PC-9 (cell line): ENCODE measurements at regions of chr6 and their contacts with region 1.

Region 1: DNA sequence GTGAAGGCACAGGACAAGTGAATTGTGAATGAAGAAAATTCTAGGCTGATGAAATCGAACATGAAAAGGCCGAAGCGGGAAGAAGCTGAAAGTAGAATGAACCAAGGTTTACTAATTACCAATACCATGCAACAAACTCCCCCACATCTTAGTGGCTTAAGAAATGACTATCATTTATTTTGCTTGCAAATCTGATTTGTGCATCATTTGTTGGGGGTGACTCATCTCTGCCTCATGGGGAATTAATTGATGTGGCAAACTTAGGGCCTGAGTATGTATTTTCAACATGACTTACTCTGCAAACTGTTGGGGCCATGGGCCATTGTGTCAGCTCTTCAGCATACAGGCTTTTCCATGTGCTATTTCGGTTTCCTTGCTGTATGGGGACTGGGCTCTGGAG is 26.8 kb downstream of the PPP1R14C start:
- DNase-seq: peak in 1 of 2 experiments; percentile 57
- H3K4me3 ChIP-seq: no peak overlapping the region
- H3K27ac ChIP-seq: no peak overlapping the region
- H3K4me1 ChIP-seq: peaks cover 10% of the 10 kb centered on the region
- H3K27me3 ChIP-seq: no peaks in the 10 kb centered on the region
- CTCF ChIP-seq: no peak

Region 2: DNA sequence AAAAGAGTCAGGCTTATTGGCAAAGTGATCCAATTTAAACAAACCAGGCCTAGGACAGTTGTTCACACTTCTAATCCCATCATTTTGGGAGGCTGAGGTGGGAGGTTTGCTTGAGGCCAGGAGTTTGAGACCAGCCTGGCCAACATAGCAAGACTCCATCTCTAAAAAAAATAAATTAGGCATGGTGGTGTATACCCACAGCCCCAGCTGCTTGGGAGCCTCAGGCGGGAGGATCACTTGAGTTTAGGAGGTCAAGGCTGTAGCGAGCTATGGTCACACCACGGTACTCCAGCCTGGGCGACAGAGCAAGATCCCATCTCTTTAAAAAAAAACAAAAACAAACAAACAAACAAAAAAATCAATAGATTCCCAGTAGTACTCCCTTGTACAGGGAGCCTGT is 1740.2 kb before region 1 on chr6:
- CTCF ChIA-PET with region 1: no interaction called
- POLR2A ChIA-PET with region 1: interaction called, 26 read pairs
- intact Hi-C with region 1: no loop called
- DNase-seq: no peak
- H3K4me3 ChIP-seq: no peak overlapping the region
- H3K27ac ChIP-seq: no peak overlapping the region
- H3K4me1 ChIP-seq: no peaks in the 10 kb centered on the region
- H3K27me3 ChIP-seq: no peaks in the 10 kb centered on the region
- CTCF ChIP-seq: no peak

Region 3: GRCh38 chr6:150091476-150091875 is 78.1 kb before region 1 on chr6:
- CTCF ChIA-PET with region 1: no interaction called
- POLR2A ChIA-PET with region 1: no interaction called
- intact Hi-C with region 1: no loop called
- DNase-seq: no peak
- H3K4me3 ChIP-seq: no peak overlapping the region
- H3K27ac ChIP-seq: no peak overlapping the region
- H3K4me1 ChIP-seq: no peaks in the 10 kb centered on the region
- H3K27me3 ChIP-seq: no peaks in the 10 kb centered on the region
- CTCF ChIP-seq: no peak

Region 4: GRCh38 chr6:150119173-150119572 is 50.4 kb before region 1 on chr6:
- CTCF ChIA-PET with region 1: no interaction called
- POLR2A ChIA-PET with region 1: interaction called, 21 read pairs
- intact Hi-C with region 1: no loop called
- DNase-seq: no peak
- H3K4me3 ChIP-seq: no peak overlapping the region
- H3K27ac ChIP-seq: no peak overlapping the region
- H3K4me1 ChIP-seq: peaks cover 17% of the 10 kb centered on the region
- H3K27me3 ChIP-seq: no peaks in the 10 kb centered on the region
- CTCF ChIP-seq: no peak

Region 5: GRCh38 chr6:150220634-150221551 is 51.3 kb after region 1 on chr6:
- CTCF ChIA-PET with region 1: no interaction called
- POLR2A ChIA-PET with region 1: no interaction called
- intact Hi-C with region 1: no loop called
- DNase-seq: no peak
- H3K4me3 ChIP-seq: no peak overlapping the region
- H3K27ac ChIP-seq: no peak overlapping the region
- H3K4me1 ChIP-seq: no peaks in the 10 kb centered on the region
- H3K27me3 ChIP-seq: no peaks in the 10 kb centered on the region
- CTCF ChIP-seq: no peak